Activated CD4-positive, alpha-beta T cell treated with anti-CD3 and anti-CD28 coated beads for 36 hours (primary cell): ENCODE measurements at regions of chr5 and their contacts with region 1.

Region 1: DNA sequence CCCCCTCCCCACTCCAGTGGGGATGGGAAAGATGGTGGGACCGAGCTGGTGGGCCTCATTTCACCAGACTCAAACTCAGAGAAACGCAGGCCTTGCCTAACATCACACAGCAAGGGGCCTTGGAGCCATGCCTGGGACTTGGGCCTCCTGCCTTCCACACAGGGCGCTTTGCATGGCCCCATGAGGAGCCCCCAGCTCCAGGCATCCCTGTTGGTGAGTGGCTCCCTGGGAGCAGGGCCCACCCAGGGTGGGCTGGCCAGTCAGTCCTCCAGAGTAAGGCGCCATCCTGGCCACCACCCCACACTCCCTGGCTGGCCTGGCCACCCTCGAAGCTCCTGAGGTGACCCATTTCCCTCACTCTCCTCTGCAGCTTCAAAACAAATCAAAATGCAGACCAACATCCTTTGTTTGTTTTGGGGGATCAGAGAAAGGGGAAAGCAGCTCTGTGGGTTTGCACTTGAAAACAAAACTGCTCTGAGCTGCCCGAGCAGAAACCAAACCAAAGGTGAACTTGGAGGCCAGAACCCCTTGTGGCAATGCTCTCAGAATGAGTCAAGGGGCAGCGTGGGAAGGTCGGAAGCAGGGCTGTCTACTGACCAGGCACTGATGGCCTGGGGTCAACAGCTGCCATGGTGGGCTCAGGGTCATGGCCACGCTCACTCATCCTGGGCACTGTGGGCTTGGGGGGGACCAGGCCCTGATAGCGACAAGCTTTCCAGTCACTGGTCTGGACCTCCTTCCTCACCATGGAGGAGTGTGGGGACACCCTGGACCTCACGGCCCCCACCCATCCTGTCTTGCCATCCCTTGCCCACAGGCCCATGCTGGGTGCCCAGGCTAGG is 37.0 kb upstream of the VDAC1 start:
- DNase-seq: no peak
- ATAC-seq: no peak
- H3K4me3 Mint-ChIP-seq: no peak overlapping the region
- H3K27ac Mint-ChIP-seq: peak overlapping the region; percentile 31
- H3K4me1 Mint-ChIP-seq: peaks cover 49% of the 10 kb centered on the region
- H3K27me3 Mint-ChIP-seq: no peaks in the 10 kb centered on the region

Region 2: GRCh38 chr5:134004592-134005375 is 37.0 kb before region 1 on chr5 and contains the start of gene VDAC1:
- CTCF ChIA-PET with region 1: interaction called, 21 read pairs
- POLR2A ChIA-PET with region 1: no interaction called
- intact Hi-C with region 1: no loop called
- DNase-seq: peak; percentile 92
- ATAC-seq: peak; percentile 85
- H3K4me3 Mint-ChIP-seq: peak within 1 kb of the TSS; percentile 94
- H3K27ac Mint-ChIP-seq: peak within 1 kb of the TSS; percentile 98
- H3K4me1 Mint-ChIP-seq: peaks cover 44% of the 10 kb centered on the region
- H3K27me3 Mint-ChIP-seq: no peaks in the 10 kb centered on the region
- total RNA-seq, gene VDAC1: 482 to 486 TPM

Region 3: GRCh38 chr5:134063188-134063820 is 21.5 kb after region 1 on chr5:
- CTCF ChIA-PET with region 1: interaction called, 30 read pairs
- POLR2A ChIA-PET with region 1: interaction called, 3 read pairs
- intact Hi-C with region 1: loop called (anchors 1 to 2 kb)
- DNase-seq: no peak
- ATAC-seq: no peak
- H3K4me3 Mint-ChIP-seq: no peak overlapping the region
- H3K27ac Mint-ChIP-seq: no peak overlapping the region
- H3K4me1 Mint-ChIP-seq: peaks cover 23% of the 10 kb centered on the region
- H3K27me3 Mint-ChIP-seq: no peaks in the 10 kb centered on the region

Region 4: GRCh38 chr5:134113902-134114875 is 72.4 kb after region 1 on chr5 and contains the start of gene TCF7:
- CTCF ChIA-PET with region 1: interaction called, 109 read pairs
- POLR2A ChIA-PET with region 1: interaction called, 10 read pairs
- intact Hi-C with region 1: no loop called
- DNase-seq: peak; percentile 88
- ATAC-seq: peak; percentile 40
- H3K4me3 Mint-ChIP-seq: peak within 1 kb of the TSS; percentile 85
- H3K27ac Mint-ChIP-seq: peak within 1 kb of the TSS; percentile 97
- H3K4me1 Mint-ChIP-seq: peaks cover 61% of the 10 kb centered on the region
- H3K27me3 Mint-ChIP-seq: no peaks in the 10 kb centered on the region
- total RNA-seq, gene TCF7: 94.8 to 117 TPM

Region 5: DNA sequence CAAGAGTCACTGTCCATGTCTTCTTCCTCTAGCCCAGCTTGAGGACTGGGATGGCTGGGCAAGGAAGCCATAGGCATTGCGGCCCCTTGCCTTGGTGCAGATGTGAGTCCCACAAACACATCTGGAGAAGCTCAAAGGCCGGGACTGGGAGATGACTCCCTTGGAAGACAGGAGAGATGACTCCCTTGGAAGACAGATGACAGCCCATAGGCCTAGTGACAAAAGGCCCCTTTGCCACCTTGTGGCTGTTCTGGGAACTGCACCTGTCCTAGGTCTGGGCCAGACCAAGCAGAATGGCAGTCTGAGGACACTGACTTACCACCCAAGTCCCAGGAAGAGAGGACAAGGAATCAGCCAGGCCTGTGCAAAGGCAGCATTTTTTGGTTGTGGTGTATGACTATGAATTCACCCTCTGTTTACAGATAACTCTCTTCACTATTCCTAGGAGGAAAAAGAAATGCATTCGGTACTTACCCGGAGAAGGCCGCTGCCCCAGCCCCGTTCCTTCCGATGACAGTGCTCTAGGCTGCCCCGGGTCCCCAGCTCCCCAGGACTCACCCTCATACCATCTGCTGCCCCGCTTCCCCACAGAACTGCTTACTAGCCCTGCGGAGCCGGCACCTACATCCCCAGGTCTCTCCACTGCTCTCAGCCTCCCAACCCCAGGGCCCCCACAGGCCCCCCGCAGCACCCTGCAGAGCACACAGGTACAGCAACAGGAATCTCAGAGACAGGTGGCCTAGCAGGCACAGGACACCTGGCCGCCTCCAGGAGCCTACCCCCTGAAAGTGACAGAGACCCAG is 104.2 kb after region 1 on chr5:
- CTCF ChIA-PET with region 1: interaction called, 554 read pairs
- POLR2A ChIA-PET with region 1: interaction called, 13 read pairs
- intact Hi-C with region 1: loop called (anchors 1 kb)
- DNase-seq: peak; percentile 91
- ATAC-seq: peak; percentile 81
- H3K4me3 Mint-ChIP-seq: no peak overlapping the region
- H3K27ac Mint-ChIP-seq: peak overlapping the region; percentile 44
- H3K4me1 Mint-ChIP-seq: peaks cover 43% of the 10 kb centered on the region
- H3K27me3 Mint-ChIP-seq: no peaks in the 10 kb centered on the region

Region 6: DNA sequence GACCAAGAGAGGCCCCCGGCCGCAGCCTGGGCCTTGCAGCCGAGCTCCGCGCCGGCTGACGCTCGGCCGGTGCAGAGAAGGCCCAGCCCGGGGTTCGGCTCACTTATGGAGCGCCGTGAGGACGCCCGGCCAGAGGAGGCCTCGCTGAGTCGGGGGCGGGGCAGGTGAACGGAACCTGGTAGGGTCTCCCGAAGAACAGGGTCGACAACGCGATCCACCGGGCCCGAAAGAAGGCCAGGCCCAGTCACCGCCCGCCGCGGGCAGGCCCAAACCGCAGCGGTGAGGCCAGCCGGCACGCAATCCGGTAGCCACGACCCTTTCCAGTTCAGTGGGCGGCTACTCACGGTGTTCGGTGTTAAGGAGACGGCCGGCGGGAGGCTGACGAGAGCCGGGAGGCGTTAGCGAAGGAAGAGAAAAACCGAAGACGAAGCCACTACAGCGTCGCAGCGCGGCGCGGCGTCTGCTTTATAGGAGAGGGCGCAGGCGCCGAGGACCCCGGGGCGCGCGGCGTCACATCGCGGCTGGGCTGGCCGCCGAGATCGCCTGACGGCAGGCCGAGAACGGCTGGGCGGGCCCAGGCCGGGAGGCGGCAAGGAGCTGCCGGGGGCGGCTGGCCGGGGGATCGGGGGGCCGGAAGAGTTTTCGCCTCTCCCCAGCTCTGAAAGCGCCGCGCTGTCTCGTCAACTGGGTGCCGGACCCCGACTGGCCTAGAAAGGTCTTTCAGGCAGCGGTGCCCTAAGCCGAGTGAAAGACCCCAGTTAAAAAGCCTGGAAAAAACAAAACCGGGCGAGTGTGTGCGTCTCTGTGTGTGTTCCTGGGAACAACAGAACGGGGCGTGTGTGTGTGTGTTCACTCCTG is 134.9 kb after region 1 on chr5 and contains the start of gene SKP1:
- CTCF ChIA-PET with region 1: interaction called, 11 read pairs
- POLR2A ChIA-PET with region 1: no interaction called
- intact Hi-C with region 1: loop called in 1 of 2 experiments (anchors 2 kb)
- DNase-seq: peak; percentile 91
- ATAC-seq: peak; percentile 85
- H3K4me3 Mint-ChIP-seq: peak within 1 kb of the TSS; percentile 98
- H3K27ac Mint-ChIP-seq: peak within 1 kb of the TSS; percentile 95
- H3K4me1 Mint-ChIP-seq: peaks cover 32% of the 10 kb centered on the region
- H3K27me3 Mint-ChIP-seq: no peaks in the 10 kb centered on the region
- total RNA-seq, gene SKP1: 218 to 265 TPM

Region 7: GRCh38 chr5:134451936-134452505 is 410.2 kb after region 1 on chr5:
- CTCF ChIA-PET with region 1: no interaction called
- POLR2A ChIA-PET with region 1: no interaction called
- intact Hi-C with region 1: no loop called
- DNase-seq: no peak
- ATAC-seq: peak; percentile 36
- H3K4me3 Mint-ChIP-seq: no peak overlapping the region
- H3K27ac Mint-ChIP-seq: no peak overlapping the region
- H3K4me1 Mint-ChIP-seq: no peaks in the 10 kb centered on the region
- H3K27me3 Mint-ChIP-seq: no peaks in the 10 kb centered on the region